Activated CD4-positive, alpha-beta T cell treated with anti-CD3 and anti-CD28 coated beads, Interleukin-2, amount 10 ng/mL, durations not matched to agents 24 days and 14 days (primary cell): ENCODE measurements at regions of chr10 and their contacts with region 1.

Region 1: DNA sequence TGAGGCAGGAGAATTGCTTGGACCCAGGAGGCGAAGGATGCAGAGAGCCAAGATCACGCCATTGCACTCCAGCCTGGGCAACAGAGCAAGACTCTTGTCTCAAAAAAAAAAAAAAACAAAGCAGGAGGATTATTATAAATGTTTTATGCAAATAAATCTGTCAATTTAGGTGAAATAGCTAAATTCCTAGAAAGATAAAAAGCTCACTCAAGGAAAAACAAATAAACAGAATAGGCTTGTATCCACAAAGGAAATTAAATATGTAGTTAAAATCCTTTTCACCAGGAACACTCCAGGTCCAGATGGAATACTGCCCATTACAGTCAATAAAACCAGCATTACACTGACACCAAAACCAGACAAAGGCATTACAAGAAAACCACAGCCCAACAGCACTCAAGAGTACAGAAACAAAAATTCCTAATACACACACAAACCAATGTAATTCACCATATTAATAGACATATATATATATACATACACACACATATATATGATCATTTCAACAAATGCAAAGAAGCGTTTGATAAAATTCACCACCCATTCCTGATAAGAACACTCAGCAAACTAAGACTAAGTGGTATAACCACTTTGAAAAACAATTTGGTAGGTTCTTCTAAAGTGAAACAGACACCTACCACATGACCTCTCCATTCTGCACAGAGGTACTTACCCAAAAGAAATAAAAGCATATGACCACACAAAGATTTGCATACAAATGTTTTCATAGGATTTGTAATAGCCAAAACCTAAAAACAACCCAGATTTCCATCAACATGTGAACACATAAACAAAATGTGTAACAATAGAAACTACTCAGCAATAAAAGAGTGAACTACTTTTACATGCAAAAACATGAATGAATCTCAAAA is 38.8 kb downstream of the ABI1 start:
- DNase-seq: no peak
- H3K4me3 Mint-ChIP-seq: no peak overlapping the region
- H3K27ac Mint-ChIP-seq: peak overlapping the region; percentile 39
- H3K4me1 Mint-ChIP-seq: peaks cover 24% of the 10 kb centered on the region
- H3K27me3 Mint-ChIP-seq: no peaks in the 10 kb centered on the region

Region 2: GRCh38 chr10:26593896-26594295 is 228.0 kb before region 1 on chr10:
- intact Hi-C with region 1: no loop called
- DNase-seq: no peak
- H3K4me3 Mint-ChIP-seq: no peak overlapping the region
- H3K27ac Mint-ChIP-seq: no peak overlapping the region
- H3K4me1 Mint-ChIP-seq: no peaks in the 10 kb centered on the region
- H3K27me3 Mint-ChIP-seq: peaks cover 2% of the 10 kb centered on the region

Region 3: GRCh38 chr10:26805567-26806245 is 16.2 kb before region 1 on chr10:
- intact Hi-C with region 1: no loop called
- DNase-seq: no peak
- H3K4me3 Mint-ChIP-seq: peak overlapping the region; percentile 14
- H3K27ac Mint-ChIP-seq: peak overlapping the region; percentile 7
- H3K4me1 Mint-ChIP-seq: peaks cover 43% of the 10 kb centered on the region
- H3K27me3 Mint-ChIP-seq: no peaks in the 10 kb centered on the region

Region 4: DNA sequence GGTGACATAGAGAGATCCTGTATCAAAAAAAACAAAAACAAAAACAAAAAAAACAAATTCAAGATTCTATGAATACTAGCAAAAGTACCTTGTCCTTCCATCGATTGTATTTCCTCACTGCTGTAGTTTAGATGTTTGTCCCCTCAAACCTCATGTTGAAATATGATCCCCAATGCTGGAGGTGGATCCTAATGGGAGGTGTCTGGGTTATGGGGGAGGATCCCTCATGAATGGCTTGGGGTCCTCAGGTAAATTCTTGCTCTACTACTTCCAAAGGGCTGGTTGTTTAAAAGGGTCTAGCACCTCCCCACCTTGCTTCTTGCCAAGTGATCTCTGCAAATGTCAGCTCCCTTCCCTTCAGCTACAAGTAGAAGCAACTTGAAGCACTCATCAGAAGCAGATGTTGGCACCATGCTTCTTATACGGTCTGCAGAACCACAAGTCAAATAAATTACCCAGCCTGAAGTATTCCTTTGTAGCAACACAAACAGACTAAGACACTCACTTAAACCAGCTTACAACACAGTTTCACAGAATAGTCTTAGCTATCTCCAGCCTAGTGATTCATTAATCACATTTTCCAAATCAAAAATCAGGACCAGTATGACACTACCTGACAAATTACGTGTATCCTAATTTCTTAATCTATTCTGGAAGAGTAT is 18.2 kb after region 1 on chr10:
- intact Hi-C with region 1: loop called (anchors 2 kb)
- DNase-seq: no peak
- H3K4me3 Mint-ChIP-seq: no peak overlapping the region
- H3K27ac Mint-ChIP-seq: peak overlapping the region; percentile 75
- H3K4me1 Mint-ChIP-seq: peaks cover 40% of the 10 kb centered on the region
- H3K27me3 Mint-ChIP-seq: no peaks in the 10 kb centered on the region